Activated CD4-positive, alpha-beta memory T cell treated with anti-CD3 and anti-CD28 coated beads, Interleukin-2, amount 10 ng/mL, durations not matched to agents 7 days and 5 days (primary cell): ENCODE measurements at regions of chr15 and their contacts with region 1.

Region 1: GRCh38 chr15:101288908-101289513 is 6.0 kb downstream of the SNRPA1 start:
- DNase-seq: no peak
- H3K4me3 Mint-ChIP-seq: no peak overlapping the region
- H3K27ac Mint-ChIP-seq: peak overlapping the region; percentile 16
- H3K4me1 Mint-ChIP-seq: peaks cover 55% of the 10 kb centered on the region
- H3K27me3 Mint-ChIP-seq: no peaks in the 10 kb centered on the region

Region 2: DNA sequence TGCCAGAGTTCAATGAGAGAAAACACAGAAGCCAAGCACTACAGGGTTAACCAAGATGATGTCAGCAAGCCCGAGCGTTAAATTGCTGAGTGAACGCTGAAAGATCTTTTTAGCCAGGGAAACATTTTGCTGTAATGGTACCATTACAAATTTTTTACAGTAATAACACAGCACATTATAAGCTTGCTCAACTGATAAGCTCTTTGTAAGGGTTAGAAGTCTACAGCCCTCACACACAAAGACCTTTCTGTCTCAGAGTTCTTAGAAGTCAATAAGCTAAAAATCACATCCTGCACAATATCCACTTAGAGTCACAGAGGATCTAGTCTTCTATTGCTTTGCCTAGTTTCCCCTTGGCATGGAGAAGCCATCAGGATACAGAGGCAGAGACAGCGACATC is 67.1 kb before region 1 on chr15:
- CTCF ChIA-PET with region 1: no interaction called
- POLR2A ChIA-PET with region 1: no interaction called
- DNase-seq: no peak
- H3K4me3 Mint-ChIP-seq: no peak overlapping the region
- H3K27ac Mint-ChIP-seq: no peak overlapping the region
- H3K4me1 Mint-ChIP-seq: peaks cover 62% of the 10 kb centered on the region
- H3K27me3 Mint-ChIP-seq: no peaks in the 10 kb centered on the region

Region 3: GRCh38 chr15:101277038-101277882 is 11.8 kb before region 1 on chr15 and contains the start of gene SELENOS:
- CTCF ChIA-PET with region 1: interaction called, 40 read pairs
- POLR2A ChIA-PET with region 1: interaction called, 54 read pairs
- DNase-seq: peak; percentile 91
- H3K4me3 Mint-ChIP-seq: peak within 1 kb of the TSS; percentile 96
- H3K27ac Mint-ChIP-seq: peak within 1 kb of the TSS; percentile 86
- H3K4me1 Mint-ChIP-seq: peaks cover 36% of the 10 kb centered on the region
- H3K27me3 Mint-ChIP-seq: no peaks in the 10 kb centered on the region
- total RNA-seq, gene SELENOS: 43.0 to 45.7 TPM

Region 4: GRCh38 chr15:101342056-101342455 is 53.0 kb after region 1 on chr15:
- CTCF ChIA-PET with region 1: no interaction called
- POLR2A ChIA-PET with region 1: no interaction called
- DNase-seq: no peak
- H3K4me3 Mint-ChIP-seq: no peak overlapping the region
- H3K27ac Mint-ChIP-seq: no peak overlapping the region
- H3K4me1 Mint-ChIP-seq: no peaks in the 10 kb centered on the region
- H3K27me3 Mint-ChIP-seq: peaks cover 21% of the 10 kb centered on the region

Region 5: GRCh38 chr15:101381671-101382212 is 92.7 kb after region 1 on chr15:
- CTCF ChIA-PET with region 1: no interaction called
- POLR2A ChIA-PET with region 1: no interaction called
- DNase-seq: no peak
- H3K4me3 Mint-ChIP-seq: no peak overlapping the region
- H3K27ac Mint-ChIP-seq: no peak overlapping the region
- H3K4me1 Mint-ChIP-seq: no peaks in the 10 kb centered on the region
- H3K27me3 Mint-ChIP-seq: peaks cover 1% of the 10 kb centered on the region

Region 6: DNA sequence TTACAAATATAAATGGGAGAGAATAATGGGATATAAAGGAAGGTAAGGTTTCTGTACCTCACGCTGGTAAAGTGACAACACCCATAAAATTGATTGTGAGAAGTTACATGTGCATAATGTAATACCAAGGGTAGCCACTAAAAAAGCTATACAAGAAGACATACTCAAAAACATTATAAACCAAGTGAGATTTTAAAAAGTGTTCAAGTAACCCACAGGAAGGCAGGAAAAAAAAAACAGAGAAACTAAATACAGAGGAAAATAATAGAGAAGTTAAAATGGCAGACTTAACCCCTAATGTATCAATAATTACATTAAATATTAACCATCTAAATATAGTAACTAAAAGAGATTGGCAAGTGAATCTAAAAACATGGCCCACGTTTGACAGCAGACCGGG is 124.2 kb after region 1 on chr15:
- CTCF ChIA-PET with region 1: no interaction called
- POLR2A ChIA-PET with region 1: no interaction called
- DNase-seq: no peak
- H3K4me3 Mint-ChIP-seq: no peak overlapping the region
- H3K27ac Mint-ChIP-seq: no peak overlapping the region
- H3K4me1 Mint-ChIP-seq: no peaks in the 10 kb centered on the region
- H3K27me3 Mint-ChIP-seq: peaks cover 17% of the 10 kb centered on the region

Region 7: GRCh38 chr15:101652098-101652782 is 363.2 kb after region 1 on chr15 and contains the start of gene TM2D3:
- CTCF ChIA-PET with region 1: interaction called, 17 read pairs
- POLR2A ChIA-PET with region 1: interaction called, 46 read pairs
- DNase-seq: peak; percentile 96
- H3K4me3 Mint-ChIP-seq: peak within 1 kb of the TSS; percentile 91
- H3K27ac Mint-ChIP-seq: peak within 1 kb of the TSS; percentile 97
- H3K4me1 Mint-ChIP-seq: peaks cover 43% of the 10 kb centered on the region
- H3K27me3 Mint-ChIP-seq: no peaks in the 10 kb centered on the region
- total RNA-seq, gene TM2D3: 41.8 to 43.8 TPM